Endothelial cell of umbilical vein (primary cell): ENCODE measurements at regions of chr6 and their contacts with region 1.

Region 1: DNA sequence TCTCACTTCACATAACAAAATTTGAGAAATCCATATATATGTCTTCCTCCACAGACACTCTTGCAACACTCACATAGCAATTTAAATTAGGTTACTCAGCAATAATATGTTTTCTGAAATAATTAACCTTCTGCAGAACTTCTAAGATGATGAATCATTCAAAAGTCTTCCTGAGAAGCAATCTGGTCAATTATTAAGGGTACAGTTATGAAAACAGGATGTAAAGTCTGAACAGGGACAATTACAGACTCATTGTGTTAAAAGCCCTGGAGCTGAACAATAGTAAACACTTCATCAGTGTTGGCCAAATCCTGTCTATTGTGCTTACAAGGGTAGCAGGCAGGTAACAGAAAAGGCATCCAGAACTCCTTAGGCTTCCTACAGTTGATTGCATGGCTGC is 75.4 kb downstream of the FILIP1 start:
- DNase-seq: peak; percentile 94
- H3K4me3 ChIP-seq: no peak overlapping the region
- H3K27ac ChIP-seq: peak overlapping the region; percentile 81
- H3K4me1 ChIP-seq: peaks cover 48% of the 10 kb centered on the region
- H3K27me3 ChIP-seq: no peaks in the 10 kb centered on the region
- CTCF ChIP-seq: no peak
- POLR2A ChIP-seq: peak; percentile 17

Region 2: GRCh38 chr6:75376347-75377024 is 41.7 kb before region 1 on chr6:
- CTCF ChIA-PET with region 1: no interaction called
- POLR2A ChIA-PET with region 1: no interaction called
- dilution Hi-C with region 1: no loop called
- intact Hi-C with region 1: no loop called
- DNase-seq: peak; percentile 61
- H3K4me3 ChIP-seq: no peak overlapping the region
- H3K27ac ChIP-seq: no peak overlapping the region
- H3K4me1 ChIP-seq: peaks cover 11% of the 10 kb centered on the region
- H3K27me3 ChIP-seq: no peaks in the 10 kb centered on the region
- CTCF ChIP-seq: no peak
- POLR2A ChIP-seq: no peak

Region 3: GRCh38 chr6:75437421-75437891 is 19.2 kb after region 1 on chr6:
- CTCF ChIA-PET with region 1: no interaction called
- POLR2A ChIA-PET with region 1: no interaction called
- dilution Hi-C with region 1: no loop called
- intact Hi-C with region 1: no loop called
- DNase-seq: no peak
- H3K4me3 ChIP-seq: no peak overlapping the region
- H3K27ac ChIP-seq: no peak overlapping the region
- H3K4me1 ChIP-seq: no peaks in the 10 kb centered on the region
- H3K27me3 ChIP-seq: no peaks in the 10 kb centered on the region
- CTCF ChIP-seq: no peak
- POLR2A ChIP-seq: no peak

Region 4: DNA sequence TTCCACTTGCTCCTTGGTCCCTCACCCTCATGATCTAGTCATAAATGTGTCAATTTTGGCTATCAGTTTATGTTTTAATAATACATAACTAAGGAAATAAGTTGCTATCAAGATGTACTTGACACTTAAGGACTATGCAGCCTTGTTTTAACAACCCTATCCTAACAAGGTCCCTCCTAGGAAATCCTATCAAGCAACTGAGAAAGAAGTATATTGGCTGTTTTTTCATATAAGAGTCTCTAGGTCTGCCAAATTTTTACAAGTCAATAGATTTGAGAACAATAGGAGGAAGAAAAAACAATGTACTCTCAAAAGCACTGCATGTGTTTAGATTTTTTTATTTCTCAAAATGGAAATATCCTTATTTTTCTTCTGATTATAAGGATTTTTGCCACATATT is 60.7 kb after region 1 on chr6:
- CTCF ChIA-PET with region 1: no interaction called
- POLR2A ChIA-PET with region 1: no interaction called
- dilution Hi-C with region 1: no loop called
- intact Hi-C with region 1: loop called (anchors 1 kb)
- DNase-seq: peak; percentile 88
- H3K4me3 ChIP-seq: no peak overlapping the region
- H3K27ac ChIP-seq: peak overlapping the region; percentile 29
- H3K4me1 ChIP-seq: peaks cover 29% of the 10 kb centered on the region
- H3K27me3 ChIP-seq: no peaks in the 10 kb centered on the region
- CTCF ChIP-seq: no peak
- POLR2A ChIP-seq: no peak

Region 5: DNA sequence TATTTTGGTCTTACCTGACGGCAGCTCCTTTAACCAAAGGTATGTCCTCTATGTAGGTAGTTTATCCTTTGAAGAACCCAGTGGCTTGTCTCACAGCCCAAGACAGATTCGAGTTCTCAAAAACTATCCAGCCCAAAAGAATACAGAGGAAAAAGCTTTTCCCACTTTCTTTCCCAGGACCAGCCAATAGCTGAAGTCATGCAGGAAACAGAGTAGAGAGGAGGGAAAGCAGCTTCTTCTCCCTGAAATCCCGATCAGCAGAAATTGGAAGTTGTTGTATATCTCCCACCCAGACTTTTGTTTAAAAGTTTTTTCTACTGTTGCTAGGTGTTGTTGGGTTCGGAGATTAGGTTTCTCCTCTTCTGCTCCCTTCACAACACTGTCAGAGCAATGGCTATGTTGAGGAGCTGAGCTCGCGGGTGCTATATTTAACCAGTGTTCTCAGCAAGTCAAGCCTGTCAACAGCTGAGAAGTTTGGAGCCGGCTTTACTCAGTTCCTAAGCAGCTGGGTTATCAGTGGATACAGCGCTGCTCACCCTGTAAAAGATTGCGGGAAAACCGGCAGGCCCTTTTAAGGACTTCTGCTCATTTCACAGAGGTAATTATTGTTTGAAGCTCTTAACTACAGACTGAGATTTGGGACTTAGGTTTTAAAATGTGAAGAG is 75.3 kb after region 1 on chr6 and contains the start of gene FILIP1:
- CTCF ChIA-PET with region 1: interaction called, 3 read pairs
- POLR2A ChIA-PET with region 1: no interaction called
- dilution Hi-C with region 1: no loop called
- intact Hi-C with region 1: loop called (anchors 2 kb)
- DNase-seq: no peak
- H3K4me3 ChIP-seq: peak within 1 kb of the TSS in 1 of 3 experiments; percentile 7
- H3K27ac ChIP-seq: no peak within 1 kb of the TSS
- H3K4me1 ChIP-seq: peaks cover 22% of the 10 kb centered on the region
- H3K27me3 ChIP-seq: no peaks in the 10 kb centered on the region
- CTCF ChIP-seq: no peak
- POLR2A ChIP-seq: no peak
- total RNA-seq, gene FILIP1: 12.6 and 13.7 TPM in 2 replicates

Region 6: DNA sequence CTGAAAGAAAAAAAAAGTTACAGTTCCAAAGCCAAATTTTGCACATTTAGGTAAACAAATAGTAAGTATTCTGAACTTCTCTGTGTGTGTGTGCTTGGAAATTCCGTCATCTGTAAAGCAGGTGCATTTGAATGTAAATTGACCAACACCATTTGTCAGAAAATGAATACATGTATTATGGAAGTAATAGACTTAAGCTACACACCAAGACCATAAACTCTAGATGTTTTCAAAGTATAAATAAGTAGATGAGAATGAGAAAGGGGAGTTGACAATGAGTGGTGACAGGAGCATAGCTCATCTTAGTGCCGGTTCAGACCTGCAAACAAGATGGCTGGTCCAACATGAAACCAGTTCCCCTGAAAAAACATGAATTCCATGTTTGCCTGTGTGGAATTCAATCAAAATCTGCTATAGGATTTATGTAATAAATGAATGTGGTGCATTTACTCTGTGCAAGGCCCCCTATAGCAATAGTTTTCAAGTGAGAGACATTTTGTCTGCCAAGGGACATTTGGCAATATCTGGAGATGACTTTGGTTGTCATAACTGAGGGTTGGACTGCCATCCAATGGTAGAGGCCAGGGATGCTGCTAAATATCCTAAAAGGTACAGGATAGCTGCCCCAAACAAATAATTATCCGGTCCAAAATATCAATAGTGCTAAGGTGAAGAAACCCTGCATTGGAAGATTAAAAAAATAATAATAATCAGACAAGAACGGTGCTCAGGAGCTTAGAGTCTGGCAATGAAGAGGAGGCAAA is 86.4 kb after region 1 on chr6:
- CTCF ChIA-PET with region 1: no interaction called
- POLR2A ChIA-PET with region 1: no interaction called
- dilution Hi-C with region 1: no loop called
- intact Hi-C with region 1: loop called (anchors 1 kb)
- DNase-seq: no peak
- H3K4me3 ChIP-seq: no peak overlapping the region
- H3K27ac ChIP-seq: no peak overlapping the region
- H3K4me1 ChIP-seq: peaks cover 27% of the 10 kb centered on the region
- H3K27me3 ChIP-seq: no peaks in the 10 kb centered on the region
- CTCF ChIP-seq: peak in 1 of 2 donors; percentile 15
- POLR2A ChIP-seq: no peak